Endothelial cell of umbilical vein (primary cell): ENCODE measurements at regions of chr6 and their contacts with region 1.

Region 1: GRCh38 chr6:100001915-100002388 is 7.9 kb upstream of the MCHR2 start:
- DNase-seq: peak; percentile 45
- H3K4me3 ChIP-seq: no peak overlapping the region
- H3K27ac ChIP-seq: no peak overlapping the region
- H3K4me1 ChIP-seq: no peaks in the 10 kb centered on the region
- H3K27me3 ChIP-seq: peaks cover 7 to 32% of the 10 kb centered on the region in 2 experiments
- CTCF ChIP-seq: peak; percentile 89
- POLR2A ChIP-seq: no peak

Region 2: GRCh38 chr6:99822741-99823512 is 179.0 kb before region 1 on chr6:
- CTCF ChIA-PET with region 1: no interaction called
- POLR2A ChIA-PET with region 1: no interaction called
- dilution Hi-C with region 1: no loop called
- intact Hi-C with region 1: no loop called
- DNase-seq: peak; percentile 49
- H3K4me3 ChIP-seq: no peak overlapping the region
- H3K27ac ChIP-seq: no peak overlapping the region
- H3K4me1 ChIP-seq: no peaks in the 10 kb centered on the region
- H3K27me3 ChIP-seq: peaks cover 0 to 3% of the 10 kb centered on the region in 2 experiments
- CTCF ChIP-seq: peak; percentile 9 to 14
- POLR2A ChIP-seq: no peak

Region 3: DNA sequence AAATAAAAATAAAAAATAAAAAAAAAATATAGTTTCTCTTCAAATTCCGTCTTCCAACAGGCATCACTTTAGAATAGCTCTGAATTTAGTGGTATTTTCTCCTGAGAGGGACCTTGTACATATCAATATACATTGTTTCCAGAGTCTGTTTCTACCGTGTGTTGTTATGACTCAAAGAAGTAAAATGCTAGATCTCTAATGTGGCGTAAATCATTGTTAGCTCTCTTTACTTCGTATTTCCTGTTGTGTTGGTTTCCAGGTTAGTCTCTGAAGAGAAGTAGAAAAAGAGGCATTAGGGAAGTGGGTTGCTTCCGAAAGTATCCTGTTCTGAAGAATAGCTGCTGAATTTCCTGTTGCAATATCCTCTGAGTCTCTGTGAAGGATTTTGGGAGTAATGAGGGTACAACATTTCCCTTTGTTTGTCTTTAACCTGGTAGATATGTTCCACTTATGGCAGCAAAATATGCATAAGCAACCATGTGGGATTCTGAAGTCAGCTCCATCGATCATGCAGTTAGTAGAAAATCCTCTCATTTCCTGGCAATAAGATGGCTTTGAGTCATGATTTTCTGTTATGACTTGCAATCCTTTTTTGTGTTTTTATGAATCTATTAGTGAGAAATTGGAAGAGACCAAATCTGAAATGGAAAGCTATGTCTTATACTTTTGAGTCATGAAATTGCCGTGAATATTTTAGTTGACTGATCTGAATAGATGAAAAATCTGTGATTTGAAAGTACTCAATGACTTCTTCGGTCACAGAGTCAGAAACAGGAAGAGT is 34.1 kb after region 1 on chr6:
- CTCF ChIA-PET with region 1: interaction called, 10 read pairs
- POLR2A ChIA-PET with region 1: no interaction called
- dilution Hi-C with region 1: no loop called
- intact Hi-C with region 1: no loop called
- DNase-seq: no peak
- H3K4me3 ChIP-seq: no peak overlapping the region
- H3K27ac ChIP-seq: no peak overlapping the region
- H3K4me1 ChIP-seq: no peaks in the 10 kb centered on the region
- H3K27me3 ChIP-seq: no peaks in the 10 kb centered on the region
- CTCF ChIP-seq: no peak
- POLR2A ChIP-seq: no peak

Region 4: DNA sequence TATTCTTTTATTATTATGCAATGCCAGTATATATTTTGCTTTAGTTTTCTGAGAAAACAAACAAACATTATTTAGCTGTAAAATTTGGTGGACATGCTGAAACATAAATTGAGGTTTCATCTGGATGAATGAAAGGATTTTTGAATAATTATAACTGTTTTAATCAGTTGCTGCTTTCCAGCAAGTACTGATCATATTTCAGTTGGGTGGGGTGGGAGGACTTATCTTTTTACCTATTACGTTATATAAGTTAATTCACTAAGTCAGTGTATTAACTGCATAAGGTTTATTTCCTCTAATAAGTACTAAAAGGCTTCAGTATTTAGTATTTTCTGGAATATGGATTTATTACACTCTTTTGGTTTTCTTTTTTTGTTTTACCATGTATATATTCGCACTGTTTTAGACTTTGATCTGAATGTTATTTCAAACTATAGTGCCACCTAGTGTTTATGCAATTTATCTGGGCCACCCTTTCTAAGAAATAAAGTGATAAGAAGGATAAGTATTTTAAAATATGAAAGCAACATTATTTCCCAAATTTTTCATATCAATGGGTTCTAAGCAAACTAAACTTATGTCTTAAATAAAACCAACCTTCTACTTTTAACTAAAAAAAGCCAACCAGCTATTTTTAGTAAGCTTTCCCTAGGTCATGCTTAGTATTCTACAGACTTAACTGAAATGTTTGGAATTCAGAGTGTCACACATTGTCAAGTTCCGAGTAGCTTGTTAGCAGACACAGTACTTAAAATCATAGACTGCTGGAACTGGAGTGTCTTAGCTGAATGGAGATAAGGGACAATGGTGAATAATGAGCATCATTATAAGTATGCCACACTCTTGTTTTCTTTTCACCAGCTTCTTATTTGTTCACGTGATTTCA is 97.5 kb after region 1 on chr6:
- CTCF ChIA-PET with region 1: interaction called, 69 read pairs
- POLR2A ChIA-PET with region 1: no interaction called
- dilution Hi-C with region 1: no loop called
- intact Hi-C with region 1: loop called (anchors 1 kb)
- DNase-seq: peak; percentile 44
- H3K4me3 ChIP-seq: no peak overlapping the region
- H3K27ac ChIP-seq: no peak overlapping the region
- H3K4me1 ChIP-seq: no peaks in the 10 kb centered on the region
- H3K27me3 ChIP-seq: peaks cover 8 to 34% of the 10 kb centered on the region in 2 experiments
- CTCF ChIP-seq: peak; percentile 26 to 27
- POLR2A ChIP-seq: no peak

Region 5: DNA sequence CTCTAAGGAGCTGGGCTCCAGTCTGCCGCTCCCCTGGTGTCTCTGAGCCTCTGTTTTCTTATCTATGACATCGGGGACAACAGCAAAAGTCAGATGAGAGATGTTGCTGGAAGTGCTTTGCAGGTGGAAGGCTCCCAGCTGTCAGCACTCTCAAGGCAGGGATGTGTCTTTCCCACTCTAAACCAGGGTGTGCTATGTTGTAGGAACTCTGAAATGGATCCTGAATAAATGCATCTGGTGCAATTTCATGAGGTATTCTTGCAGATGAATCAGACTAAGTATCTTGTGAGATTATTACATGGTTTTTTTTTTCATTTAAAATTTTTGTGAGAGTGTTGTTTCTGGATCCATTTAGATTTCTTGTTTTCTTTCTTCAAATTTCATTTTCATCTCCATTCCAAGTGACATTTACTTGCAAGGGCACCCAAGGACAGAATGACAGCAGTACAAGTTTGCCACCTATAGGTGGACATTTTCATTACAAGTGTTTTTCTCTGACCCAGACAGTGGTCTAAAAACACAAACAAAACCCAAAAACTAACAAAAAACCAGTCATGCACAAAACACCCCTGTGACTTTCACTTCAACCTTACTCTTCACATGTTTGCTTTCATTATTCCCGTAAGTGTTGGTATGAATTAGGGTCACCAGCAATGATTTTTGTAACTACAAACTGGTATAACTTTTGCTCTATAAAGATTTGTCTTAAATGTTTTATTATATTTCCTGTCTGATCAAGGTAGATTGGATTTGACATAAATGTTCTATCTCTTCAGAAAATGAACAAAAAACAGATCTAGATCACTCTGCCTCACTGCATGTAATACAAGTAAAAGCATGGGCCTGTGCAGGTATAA is 477.5 kb after region 1 on chr6:
- CTCF ChIA-PET with region 1: no interaction called
- POLR2A ChIA-PET with region 1: no interaction called
- dilution Hi-C with region 1: no loop called
- intact Hi-C with region 1: loop called (anchors 5 kb)
- DNase-seq: peak; percentile 68
- H3K4me3 ChIP-seq: no peak overlapping the region
- H3K27ac ChIP-seq: no peak overlapping the region
- H3K4me1 ChIP-seq: no peaks in the 10 kb centered on the region
- H3K27me3 ChIP-seq: peaks cover 0 to 5% of the 10 kb centered on the region in 2 experiments
- CTCF ChIP-seq: peak; percentile 40 to 55
- POLR2A ChIP-seq: no peak

Region 6: DNA sequence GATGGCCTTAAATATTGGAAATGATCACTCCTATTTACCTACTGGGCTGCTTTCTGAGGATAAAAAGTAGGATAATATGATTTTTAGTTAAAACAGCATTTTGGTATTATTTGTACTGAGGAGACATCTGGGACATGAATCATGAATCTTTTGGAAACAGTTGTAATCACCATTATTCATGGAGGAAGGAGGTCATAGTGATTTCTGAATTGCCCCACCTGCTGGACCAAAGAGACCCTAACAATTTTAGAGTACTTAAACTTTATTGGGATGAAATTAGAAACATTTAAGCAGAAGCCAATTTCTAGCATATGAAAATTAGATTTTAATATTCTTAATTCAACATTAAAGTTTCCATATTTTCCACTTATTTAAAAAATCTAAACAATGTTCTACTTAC is 571.2 kb after region 1 on chr6:
- CTCF ChIA-PET with region 1: no interaction called
- POLR2A ChIA-PET with region 1: no interaction called
- dilution Hi-C with region 1: no loop called
- intact Hi-C with region 1: loop called (anchors 2 kb)
- DNase-seq: peak; percentile 54
- H3K4me3 ChIP-seq: no peak overlapping the region
- H3K27ac ChIP-seq: no peak overlapping the region
- H3K4me1 ChIP-seq: no peaks in the 10 kb centered on the region
- H3K27me3 ChIP-seq: no peaks in the 10 kb centered on the region
- CTCF ChIP-seq: peak; percentile 27 to 28
- POLR2A ChIP-seq: no peak

Region 7: GRCh38 chr6:100657678-100658330 is 655.9 kb after region 1 on chr6:
- CTCF ChIA-PET with region 1: interaction called, 17 read pairs
- POLR2A ChIA-PET with region 1: no interaction called
- dilution Hi-C with region 1: no loop called
- intact Hi-C with region 1: no loop called
- DNase-seq: peak; percentile 39
- H3K4me3 ChIP-seq: no peak overlapping the region
- H3K27ac ChIP-seq: no peak overlapping the region
- H3K4me1 ChIP-seq: no peaks in the 10 kb centered on the region
- H3K27me3 ChIP-seq: no peaks in the 10 kb centered on the region
- CTCF ChIP-seq: peak; percentile 22 to 29
- POLR2A ChIP-seq: no peak

Region 8: DNA sequence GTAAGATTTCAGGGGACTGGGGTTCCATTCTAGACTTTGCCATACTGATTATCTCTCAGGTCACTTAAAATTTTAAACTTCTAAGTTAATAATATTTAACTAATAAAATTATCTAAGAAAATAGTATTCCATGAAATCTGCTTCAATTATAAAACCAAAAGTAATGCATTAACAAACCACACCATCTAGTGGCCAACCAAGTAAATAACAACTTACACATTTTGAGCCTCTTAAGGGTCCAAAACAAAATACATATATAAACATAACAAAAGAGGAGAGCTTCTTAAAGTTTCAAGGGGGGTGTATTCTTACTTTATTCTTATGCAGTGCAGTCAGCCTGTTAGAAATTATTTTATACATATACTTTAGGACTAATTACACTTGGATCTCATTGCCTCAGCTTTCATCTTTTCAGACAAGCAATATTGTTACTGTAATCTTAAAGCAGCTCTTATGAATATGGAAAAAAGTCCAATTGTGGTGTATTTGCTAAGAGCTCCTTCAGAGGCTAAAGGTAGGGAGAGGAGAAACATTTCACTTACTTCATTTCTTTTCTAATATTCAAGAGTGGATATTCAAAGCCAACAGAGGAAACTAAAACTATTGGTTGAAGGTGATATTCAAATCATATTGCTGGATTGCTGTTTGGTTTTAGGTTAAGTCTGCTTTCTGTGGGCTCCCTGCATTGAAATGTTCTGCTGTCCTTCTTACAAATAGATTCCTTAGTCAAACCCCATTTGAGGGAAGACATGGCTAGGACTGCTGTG is 662.5 kb after region 1 on chr6:
- CTCF ChIA-PET with region 1: interaction called, 13 read pairs
- POLR2A ChIA-PET with region 1: no interaction called
- dilution Hi-C with region 1: no loop called
- intact Hi-C with region 1: loop called (anchors 1 kb)
- DNase-seq: peak; percentile 40
- H3K4me3 ChIP-seq: no peak overlapping the region
- H3K27ac ChIP-seq: no peak overlapping the region
- H3K4me1 ChIP-seq: peaks cover 4% of the 10 kb centered on the region
- H3K27me3 ChIP-seq: no peaks in the 10 kb centered on the region
- CTCF ChIP-seq: peak; percentile 26 to 32
- POLR2A ChIP-seq: no peak